ENCODE measurements at regions of chr18 and their contacts with region 1.

Region 1: GRCh38 chr18:36296650-36297416 is 680 bp upstream of the FHOD3 start:
- ATAC-seq: peak; percentile 51 to 72 (median 61)
- H3K4me3 ChIP-seq: peak overlapping the region; percentile 60 to 98 (median 79)
- H3K27ac ChIP-seq: peak overlapping the region; percentile 78 to 89
- H3K4me1 ChIP-seq: peaks cover 5 to 13% of the 10 kb centered on the region in 2 donors

Region 2: GRCh38 chr18:36757081-36757480 is 460.2 kb after region 1 on chr18:
- in situ Hi-C with region 1: loop called in 1 of 9 experiments (anchors 25 kb)
- ATAC-seq: peak; percentile 43 to 72 (median 52)
- H3K4me3 ChIP-seq: no peak overlapping the region
- H3K27ac ChIP-seq: no peak overlapping the region
- H3K4me1 ChIP-seq: no peaks in the 10 kb centered on the region